Activated CD4-positive, alpha-beta T cell treated with anti-CD3 and anti-CD28 coated beads for 36 hours (primary cell): ENCODE measurements at regions of chr1 and their contacts with region 1.

Region 1: GRCh38 chr1:212791676-212792395 is at the starts of genes NSL1 and TATDN3:
- DNase-seq: peak; percentile 95
- ATAC-seq: peak; percentile 89
- H3K4me3 Mint-ChIP-seq: peak within 1 kb of the TSS; percentile 99
- H3K27ac Mint-ChIP-seq: peak within 1 kb of the TSS; percentile 94
- H3K4me1 Mint-ChIP-seq: peaks cover 43% of the 10 kb centered on the region
- H3K27me3 Mint-ChIP-seq: no peaks in the 10 kb centered on the region
- total RNA-seq, gene NSL1: 39.2 to 40.9 TPM
- total RNA-seq, gene TATDN3: 13.8 to 15.2 TPM

Region 2: GRCh38 chr1:212414328-212415106 is 377.3 kb before region 1 on chr1 and contains the start of gene PACC1:
- CTCF ChIA-PET with region 1: no interaction called
- POLR2A ChIA-PET with region 1: no interaction called
- intact Hi-C with region 1: loop called in 1 of 2 experiments (anchors 1 kb)
- DNase-seq: peak; percentile 93
- ATAC-seq: peak; percentile 98
- H3K4me3 Mint-ChIP-seq: peak within 1 kb of the TSS; percentile 93
- H3K27ac Mint-ChIP-seq: peak within 1 kb of the TSS; percentile 92
- H3K4me1 Mint-ChIP-seq: peaks cover 22% of the 10 kb centered on the region
- H3K27me3 Mint-ChIP-seq: no peaks in the 10 kb centered on the region
- total RNA-seq, gene PACC1: 9.2 to 13.8 TPM

Region 3: DNA sequence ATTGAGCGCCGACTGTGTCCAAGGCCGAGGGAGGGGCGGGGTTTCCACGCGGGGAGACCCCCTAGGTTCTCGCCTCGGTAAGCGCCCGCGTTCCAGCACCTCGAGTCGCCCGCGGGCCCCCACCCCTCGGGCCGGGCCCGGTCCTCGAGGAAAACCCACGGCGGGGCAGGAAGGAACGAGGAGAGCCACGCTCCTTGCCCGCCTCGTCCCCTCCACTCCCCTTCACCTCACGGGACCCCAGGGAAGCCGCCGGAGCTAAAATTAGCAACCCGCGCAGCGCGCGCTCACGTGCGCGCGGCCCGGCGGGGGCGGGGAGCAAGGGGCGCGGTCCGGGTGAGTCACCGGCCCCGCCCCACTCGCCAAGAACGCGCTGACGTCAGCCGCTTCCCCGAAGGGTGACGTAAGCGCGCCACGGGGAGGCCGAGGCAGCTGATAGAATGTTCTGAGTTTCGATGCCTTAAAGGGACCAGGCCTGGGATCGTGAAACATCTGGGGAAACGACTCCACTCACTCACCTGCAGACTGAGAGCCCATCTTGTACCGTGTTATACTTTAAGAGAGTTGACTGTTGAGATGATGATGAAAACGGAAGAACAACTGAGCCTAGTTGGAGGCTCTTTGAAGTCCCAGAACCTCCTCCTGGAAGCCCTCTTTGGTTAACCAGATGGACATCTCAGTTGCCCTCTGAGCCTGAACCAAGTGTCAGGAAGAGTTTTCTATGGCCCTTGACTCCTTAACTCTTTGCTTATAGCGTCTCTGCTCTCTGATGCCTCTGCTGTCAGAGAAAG is 232.9 kb before region 1 on chr1:
- CTCF ChIA-PET with region 1: no interaction called
- POLR2A ChIA-PET with region 1: no interaction called
- intact Hi-C with region 1: loop called in 1 of 2 experiments (anchors 1 kb)
- DNase-seq: peak; percentile 95
- ATAC-seq: peak; percentile 90
- H3K4me3 Mint-ChIP-seq: peak overlapping the region; percentile 61
- H3K27ac Mint-ChIP-seq: peak overlapping the region; percentile 95
- H3K4me1 Mint-ChIP-seq: peaks cover 19% of the 10 kb centered on the region
- H3K27me3 Mint-ChIP-seq: peaks cover 14% of the 10 kb centered on the region

Region 4: GRCh38 chr1:212608209-212608955 is 183.5 kb before region 1 on chr1 and contains the start of gene ATF3:
- CTCF ChIA-PET with region 1: no interaction called
- POLR2A ChIA-PET with region 1: no interaction called
- intact Hi-C with region 1: loop called in 1 of 2 experiments (anchors 2 kb)
- DNase-seq: peak; percentile 97
- ATAC-seq: peak; percentile 89
- H3K4me3 Mint-ChIP-seq: peak within 1 kb of the TSS; percentile 91
- H3K27ac Mint-ChIP-seq: peak within 1 kb of the TSS; percentile 96
- H3K4me1 Mint-ChIP-seq: peaks cover 56% of the 10 kb centered on the region
- H3K27me3 Mint-ChIP-seq: peaks cover 45% of the 10 kb centered on the region
- total RNA-seq, gene ATF3: 40.3 to 44.9 TPM

Region 5: GRCh38 chr1:212990276-212990675 is 198.4 kb after region 1 on chr1:
- CTCF ChIA-PET with region 1: interaction called, 13 read pairs
- POLR2A ChIA-PET with region 1: no interaction called
- intact Hi-C with region 1: loop called (anchors 5 kb)
- DNase-seq: no peak
- ATAC-seq: no peak
- H3K4me3 Mint-ChIP-seq: no peak overlapping the region
- H3K27ac Mint-ChIP-seq: no peak overlapping the region
- H3K4me1 Mint-ChIP-seq: peaks cover 8% of the 10 kb centered on the region
- H3K27me3 Mint-ChIP-seq: no peaks in the 10 kb centered on the region

Region 6: GRCh38 chr1:213051127-213051880 is 259.5 kb after region 1 on chr1 and contains the start of gene RPS6KC1:
- CTCF ChIA-PET with region 1: no interaction called
- POLR2A ChIA-PET with region 1: no interaction called
- intact Hi-C with region 1: loop called (anchors 1 to 5 kb)
- DNase-seq: peak; percentile 92
- ATAC-seq: peak; percentile 97
- H3K4me3 Mint-ChIP-seq: peak within 1 kb of the TSS; percentile 82
- H3K27ac Mint-ChIP-seq: peak within 1 kb of the TSS; percentile 93
- H3K4me1 Mint-ChIP-seq: peaks cover 27% of the 10 kb centered on the region
- H3K27me3 Mint-ChIP-seq: peaks cover 9% of the 10 kb centered on the region
- total RNA-seq, gene RPS6KC1: 4.9 to 5.7 TPM